ENCODE measurements at regions of chr17 and their contacts with region 1.

Region 1: GRCh38 chr17:10226930-10227685 is 28.7 kb upstream of the GAS7 start:
- DNase-seq: peak; percentile 55 to 57
- ATAC-seq: peak; percentile 79 to 96
- H3K4me3 ChIP-seq: no peak overlapping the region
- H3K27ac ChIP-seq: no peak overlapping the region
- H3K4me1 ChIP-seq: no peaks in the 10 kb centered on the region
- CTCF ChIP-seq: peak; percentile 75
- EP300 ChIP-seq: no peak
- POLR2A ChIP-seq: no peak
- RAD21 ChIP-seq: peak; percentile 63 to 75

Region 2: DNA sequence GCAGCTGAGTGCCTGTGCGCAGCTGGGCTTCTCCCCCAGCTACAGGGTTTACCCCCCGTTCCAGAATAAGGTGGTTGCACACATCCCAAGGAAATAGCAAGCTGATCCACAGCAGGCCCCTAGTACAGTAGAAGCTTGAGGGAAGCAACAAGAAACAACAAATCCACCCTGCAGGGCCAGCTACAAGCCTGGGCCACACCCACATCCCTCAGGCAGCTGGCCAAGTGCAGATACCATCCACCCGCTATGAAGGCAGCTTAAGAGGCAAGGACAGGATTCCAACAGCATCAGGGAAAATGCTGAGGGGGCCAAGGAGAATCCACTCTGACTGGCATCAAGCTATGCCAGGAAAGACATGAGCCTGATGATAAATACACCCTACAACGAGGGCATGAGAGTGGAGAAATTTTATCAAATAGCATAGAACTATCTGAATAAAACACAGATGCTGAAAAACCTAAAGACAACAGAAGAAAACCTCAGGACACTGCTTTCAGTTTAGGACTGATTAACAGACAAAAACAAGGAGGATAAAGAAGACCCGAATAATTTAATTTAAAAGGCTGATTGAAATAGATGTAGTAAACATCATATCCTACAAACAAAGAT is 255.0 kb before region 1 on chr17:
- CTCF ChIA-PET with region 1: interaction called, 27 read pairs
- POLR2A ChIA-PET with region 1: no interaction called
- DNase-seq: peak in 1 of 2 experiments; percentile 24
- ATAC-seq: peak; percentile 48 to 66; a peak in 3 of 6 replicates
- H3K4me3 ChIP-seq: no peak overlapping the region
- H3K27ac ChIP-seq: no peak overlapping the region
- H3K4me1 ChIP-seq: peaks cover 21% of the 10 kb centered on the region
- CTCF ChIP-seq: no peak
- EP300 ChIP-seq: no peak
- POLR2A ChIP-seq: no peak
- RAD21 ChIP-seq: no peak

Region 3: GRCh38 chr17:9987779-9988574 is 239.1 kb before region 1 on chr17:
- CTCF ChIA-PET with region 1: interaction called, 20 read pairs
- POLR2A ChIA-PET with region 1: no interaction called
- DNase-seq: peak; percentile 57 to 66
- ATAC-seq: peak in 1 of 2 experiments; percentile 88; a peak in 3 of 6 replicates
- H3K4me3 ChIP-seq: no peak overlapping the region
- H3K27ac ChIP-seq: no peak overlapping the region
- H3K4me1 ChIP-seq: no peaks in the 10 kb centered on the region
- CTCF ChIP-seq: peak; percentile 82
- EP300 ChIP-seq: no peak
- POLR2A ChIP-seq: no peak
- RAD21 ChIP-seq: peak; percentile 45

Region 4: GRCh38 chr17:10018461-10018891 is 208.6 kb before region 1 on chr17:
- CTCF ChIA-PET with region 1: no interaction called
- POLR2A ChIA-PET with region 1: no interaction called
- DNase-seq: no peak
- ATAC-seq: no peak
- H3K4me3 ChIP-seq: no peak overlapping the region
- H3K27ac ChIP-seq: no peak overlapping the region
- H3K4me1 ChIP-seq: no peaks in the 10 kb centered on the region
- CTCF ChIP-seq: no peak
- EP300 ChIP-seq: no peak
- POLR2A ChIP-seq: no peak
- RAD21 ChIP-seq: no peak

Region 5: DNA sequence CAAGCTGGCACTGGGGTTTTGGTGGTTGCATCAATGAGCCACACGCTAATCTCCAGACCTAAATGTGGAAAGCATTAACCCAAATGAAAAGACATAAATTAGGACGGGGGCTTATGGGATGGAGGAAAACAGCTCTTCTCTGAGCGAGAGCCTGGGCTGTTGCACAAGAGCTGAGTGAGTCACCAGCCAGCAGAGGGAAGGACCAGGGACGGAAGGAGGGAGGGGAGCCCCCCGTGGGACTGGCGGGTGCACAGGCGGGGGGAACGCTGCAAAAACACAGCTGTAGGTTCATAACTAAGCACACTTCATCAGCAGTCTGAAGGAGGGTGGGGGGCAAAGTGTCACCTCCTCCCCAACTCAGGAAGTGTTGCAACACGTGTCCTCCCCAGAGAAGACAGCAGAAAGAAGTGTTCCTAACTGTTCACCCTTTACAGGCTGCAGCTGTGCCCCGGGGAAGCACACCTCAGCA is 112.0 kb before region 1 on chr17:
- CTCF ChIA-PET with region 1: no interaction called
- POLR2A ChIA-PET with region 1: no interaction called
- DNase-seq: peak; percentile 57 to 87
- ATAC-seq: peak; percentile 90
- H3K4me3 ChIP-seq: peak overlapping the region; percentile 28
- H3K27ac ChIP-seq: peak overlapping the region; percentile 63 to 79
- H3K4me1 ChIP-seq: peaks cover 14% of the 10 kb centered on the region
- CTCF ChIP-seq: no peak
- EP300 ChIP-seq: no peak
- POLR2A ChIP-seq: no peak
- RAD21 ChIP-seq: 0 out of 5 replicates have a peak, but pooled peaks of 1 of the 2 experiments have one; percentile 16

Region 6: DNA sequence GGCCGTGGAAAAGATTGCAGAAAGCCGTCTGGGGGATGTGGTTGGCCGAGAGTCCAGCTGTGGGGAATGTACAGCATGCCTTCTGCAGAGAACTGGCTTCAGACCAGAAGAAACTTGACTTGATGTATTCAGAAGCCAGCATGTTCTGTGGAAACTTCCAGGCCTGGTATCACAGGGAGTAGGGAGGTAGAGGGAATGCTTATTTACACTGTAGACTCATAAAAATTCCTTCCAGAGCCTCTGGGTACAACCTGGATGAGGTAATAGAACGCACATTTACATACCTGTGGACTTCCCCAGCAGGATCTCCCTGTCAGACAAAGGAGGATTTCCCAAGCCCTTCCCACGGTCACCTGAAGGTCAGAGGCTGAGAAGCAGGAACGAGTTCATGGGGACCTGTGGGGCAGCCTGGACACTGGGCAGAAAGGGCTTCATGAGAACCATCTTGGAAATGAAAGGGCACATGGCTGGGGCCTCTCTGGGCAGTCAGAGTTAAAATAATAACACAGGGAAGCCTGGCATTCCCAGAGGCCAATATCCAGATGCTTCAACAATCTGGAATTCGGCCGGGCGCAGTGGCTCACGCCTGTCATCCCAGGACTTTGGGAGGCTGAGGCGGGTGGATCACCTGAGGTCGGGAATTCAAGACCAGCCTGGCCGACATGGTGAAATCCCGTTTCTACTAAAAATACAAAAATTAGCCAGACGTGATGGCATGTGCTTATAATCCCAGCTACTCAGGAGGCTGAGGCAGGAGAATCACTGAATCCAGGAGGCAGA is 16.8 kb before region 1 on chr17:
- CTCF ChIA-PET with region 1: interaction called, 25 read pairs
- POLR2A ChIA-PET with region 1: no interaction called
- DNase-seq: no peak
- ATAC-seq: peak in 1 of 2 experiments; percentile 50; a peak in 2 of 6 replicates
- H3K4me3 ChIP-seq: no peak overlapping the region
- H3K27ac ChIP-seq: no peak overlapping the region
- H3K4me1 ChIP-seq: no peaks in the 10 kb centered on the region
- CTCF ChIP-seq: no peak
- EP300 ChIP-seq: no peak
- POLR2A ChIP-seq: no peak
- RAD21 ChIP-seq: no peak

Region 7: DNA sequence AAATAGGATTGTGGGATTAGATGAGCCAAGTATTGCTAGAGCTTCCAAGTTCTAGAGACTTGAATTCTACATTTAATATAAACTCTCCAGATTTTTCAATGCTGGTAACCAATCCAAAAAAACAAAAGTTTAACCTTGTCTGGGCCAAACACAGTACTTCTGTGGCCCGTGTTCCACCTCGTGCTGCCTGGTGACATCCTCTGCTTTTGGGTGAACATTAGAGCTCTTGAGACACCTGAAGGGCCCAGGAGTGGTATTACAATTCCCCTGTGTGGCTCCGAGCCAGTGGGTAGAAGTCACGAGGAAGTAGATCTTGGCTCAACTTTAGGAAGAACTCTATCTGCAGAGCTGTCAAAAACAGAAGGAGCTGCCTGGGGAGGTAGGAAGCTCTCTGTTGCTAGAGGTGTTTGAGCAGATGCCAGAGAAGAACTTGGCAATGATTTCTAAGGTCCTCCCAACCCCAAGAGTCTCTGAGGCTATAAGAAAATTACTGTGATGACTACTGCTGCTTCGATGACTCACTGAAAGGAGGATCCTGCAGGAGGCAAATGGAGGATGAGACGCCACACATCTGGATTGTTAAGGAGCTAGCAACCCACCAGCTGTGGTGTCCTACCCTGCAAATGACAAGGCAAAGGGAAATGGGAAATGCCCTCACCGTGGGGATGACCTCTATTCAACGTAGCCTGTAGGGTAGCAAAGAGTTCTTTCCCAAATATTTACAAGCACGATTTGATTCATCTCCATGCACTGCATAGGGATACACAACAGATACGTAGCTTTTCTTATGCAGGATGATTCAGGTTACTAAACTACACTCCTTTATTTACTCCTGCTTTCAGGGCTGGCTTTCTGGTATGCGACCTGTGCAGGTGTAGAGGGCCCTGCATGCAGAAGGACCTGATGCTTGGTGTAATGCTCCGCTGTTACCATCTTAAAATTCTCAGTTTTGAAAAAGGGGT is 17.1 kb after region 1 on chr17:
- CTCF ChIA-PET with region 1: interaction called, 11 read pairs
- POLR2A ChIA-PET with region 1: interaction called, 3 read pairs
- DNase-seq: peak in 1 of 2 experiments; percentile 17
- ATAC-seq: peak; percentile 65 to 86
- H3K4me3 ChIP-seq: no peak overlapping the region
- H3K27ac ChIP-seq: no peak overlapping the region
- H3K4me1 ChIP-seq: peaks cover 8% of the 10 kb centered on the region; the same call in 1 of the 3 replicates
- CTCF ChIP-seq: no peak
- EP300 ChIP-seq: no peak
- POLR2A ChIP-seq: no peak
- RAD21 ChIP-seq: no peak

Region 8: GRCh38 chr17:10265100-10265810 is 38.1 kb after region 1 on chr17:
- CTCF ChIA-PET with region 1: no interaction called
- POLR2A ChIA-PET with region 1: no interaction called
- DNase-seq: no peak
- ATAC-seq: 0 out of 6 replicates have a peak, but pooled peaks of 1 of the 2 experiments have one; percentile 24
- H3K4me3 ChIP-seq: no peak overlapping the region
- H3K27ac ChIP-seq: no peak overlapping the region
- H3K4me1 ChIP-seq: no peaks in the 10 kb centered on the region
- CTCF ChIP-seq: no peak
- EP300 ChIP-seq: no peak
- POLR2A ChIP-seq: no peak
- RAD21 ChIP-seq: no peak

Region 9: GRCh38 chr17:10337976-10338375 is 110.9 kb after region 1 on chr17:
- CTCF ChIA-PET with region 1: no interaction called
- POLR2A ChIA-PET with region 1: no interaction called
- DNase-seq: no peak
- ATAC-seq: no peak
- H3K4me3 ChIP-seq: no peak overlapping the region
- H3K27ac ChIP-seq: no peak overlapping the region
- H3K4me1 ChIP-seq: no peaks in the 10 kb centered on the region
- CTCF ChIP-seq: no peak
- EP300 ChIP-seq: no peak
- POLR2A ChIP-seq: no peak
- RAD21 ChIP-seq: no peak